Activated naive CD4-positive, alpha-beta T cell treated with anti-CD3 and anti-CD28 coated beads for 36 hours (primary cell): ENCODE measurements at regions of chr10 and their contacts with region 1.

Region 1: DNA sequence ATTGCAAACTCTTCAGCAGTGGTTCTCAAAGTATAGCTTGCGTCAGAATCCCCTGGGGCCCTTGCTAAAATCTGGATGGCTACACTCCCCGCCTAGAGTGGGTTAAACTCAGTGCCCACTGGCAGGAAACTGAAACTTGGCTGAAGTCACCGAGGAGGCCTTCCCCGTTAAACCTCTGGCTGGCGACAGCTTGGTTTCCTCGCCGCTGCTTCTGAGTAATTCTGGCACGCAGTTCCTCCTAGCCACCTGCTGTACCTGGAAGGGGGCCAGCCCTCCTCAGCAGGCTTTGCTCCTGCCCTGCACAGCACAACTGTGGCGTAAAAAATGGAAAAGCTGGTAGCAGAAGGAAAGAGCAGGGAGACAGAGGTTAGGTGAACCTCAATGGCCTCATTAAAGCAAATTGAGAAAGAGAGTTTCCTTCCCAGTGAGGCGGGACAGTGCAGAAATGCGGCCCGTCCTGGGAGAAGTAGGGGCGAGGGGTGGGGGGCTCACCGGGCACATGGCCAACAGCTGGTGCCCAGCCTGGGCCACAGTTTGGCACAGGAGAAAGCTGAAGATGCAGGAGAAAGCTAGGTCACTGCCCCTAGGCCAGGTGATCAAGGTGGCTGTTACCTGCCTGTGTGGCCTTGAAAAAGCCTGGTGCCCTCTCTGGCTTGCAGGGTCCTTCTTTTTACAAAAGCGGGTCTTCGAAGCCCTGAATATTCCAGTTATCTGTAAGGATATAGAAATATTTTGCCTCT is 46.6 kb downstream of the ALOX5 start:
- DNase-seq: peak; percentile 68
- H3K4me3 Mint-ChIP-seq: peak overlapping the region; percentile 86
- H3K27ac Mint-ChIP-seq: peak overlapping the region; percentile 4
- H3K4me1 Mint-ChIP-seq: peaks cover 36% of the 10 kb centered on the region
- H3K27me3 Mint-ChIP-seq: no peaks in the 10 kb centered on the region

Region 2: GRCh38 chr10:45008524-45009161 is 412.0 kb before region 1 on chr10:
- CTCF ChIA-PET with region 1: no interaction called
- intact Hi-C with region 1: loop called (anchors 10 kb)
- DNase-seq: peak; percentile 33
- H3K4me3 Mint-ChIP-seq: no peak overlapping the region
- H3K27ac Mint-ChIP-seq: no peak overlapping the region
- H3K4me1 Mint-ChIP-seq: no peaks in the 10 kb centered on the region
- H3K27me3 Mint-ChIP-seq: no peaks in the 10 kb centered on the region

Region 3: DNA sequence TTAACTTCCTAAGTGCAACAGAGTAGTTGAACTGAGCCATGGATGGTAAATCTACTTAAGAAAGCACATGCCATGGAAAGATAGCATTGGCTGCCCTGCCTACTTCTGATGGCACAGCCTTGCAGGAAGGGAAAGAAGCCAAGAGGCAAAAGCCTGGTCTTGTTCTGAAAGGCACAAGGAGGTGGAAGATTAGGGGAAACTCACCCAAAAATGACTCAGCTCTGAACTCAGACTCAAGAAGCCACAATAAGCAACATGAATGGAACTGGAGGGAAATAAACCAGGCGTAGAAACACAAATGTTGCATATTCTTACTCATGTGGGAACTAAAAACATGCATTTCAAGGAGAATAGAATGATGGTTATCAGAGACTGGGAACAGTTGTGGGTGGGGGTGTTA is 67.4 kb before region 1 on chr10:
- CTCF ChIA-PET with region 1: no interaction called
- intact Hi-C with region 1: loop called (anchors 10 kb)
- DNase-seq: no peak
- H3K4me3 Mint-ChIP-seq: no peak overlapping the region
- H3K27ac Mint-ChIP-seq: peak overlapping the region; percentile 30
- H3K4me1 Mint-ChIP-seq: peaks cover 16% of the 10 kb centered on the region
- H3K27me3 Mint-ChIP-seq: peaks cover 11% of the 10 kb centered on the region

Region 4: GRCh38 chr10:45373576-45374349 is 46.9 kb before region 1 on chr10 and contains the start of gene ALOX5:
- CTCF ChIA-PET with region 1: no interaction called
- intact Hi-C with region 1: loop called (anchors 5 kb)
- DNase-seq: peak; percentile 9
- H3K4me3 Mint-ChIP-seq: peak within 1 kb of the TSS; percentile 74
- H3K27ac Mint-ChIP-seq: no peak within 1 kb of the TSS
- H3K4me1 Mint-ChIP-seq: peaks cover 10% of the 10 kb centered on the region
- H3K27me3 Mint-ChIP-seq: peaks cover 43% of the 10 kb centered on the region
- total RNA-seq, gene ALOX5: 0.14 to 0.17 TPM

Region 5: GRCh38 chr10:46022978-46023702 is 602.5 kb after region 1 on chr10:
- CTCF ChIA-PET with region 1: no interaction called
- intact Hi-C with region 1: loop called (anchors 5 kb)
- DNase-seq: peak; percentile 87
- H3K4me3 Mint-ChIP-seq: peak overlapping the region; percentile 77
- H3K27ac Mint-ChIP-seq: peak overlapping the region; percentile 73
- H3K4me1 Mint-ChIP-seq: peaks cover 90% of the 10 kb centered on the region
- H3K27me3 Mint-ChIP-seq: no peaks in the 10 kb centered on the region